Calu3 (cell line): ENCODE measurements at regions of chr9 and their contacts with region 1.

Region 1: DNA sequence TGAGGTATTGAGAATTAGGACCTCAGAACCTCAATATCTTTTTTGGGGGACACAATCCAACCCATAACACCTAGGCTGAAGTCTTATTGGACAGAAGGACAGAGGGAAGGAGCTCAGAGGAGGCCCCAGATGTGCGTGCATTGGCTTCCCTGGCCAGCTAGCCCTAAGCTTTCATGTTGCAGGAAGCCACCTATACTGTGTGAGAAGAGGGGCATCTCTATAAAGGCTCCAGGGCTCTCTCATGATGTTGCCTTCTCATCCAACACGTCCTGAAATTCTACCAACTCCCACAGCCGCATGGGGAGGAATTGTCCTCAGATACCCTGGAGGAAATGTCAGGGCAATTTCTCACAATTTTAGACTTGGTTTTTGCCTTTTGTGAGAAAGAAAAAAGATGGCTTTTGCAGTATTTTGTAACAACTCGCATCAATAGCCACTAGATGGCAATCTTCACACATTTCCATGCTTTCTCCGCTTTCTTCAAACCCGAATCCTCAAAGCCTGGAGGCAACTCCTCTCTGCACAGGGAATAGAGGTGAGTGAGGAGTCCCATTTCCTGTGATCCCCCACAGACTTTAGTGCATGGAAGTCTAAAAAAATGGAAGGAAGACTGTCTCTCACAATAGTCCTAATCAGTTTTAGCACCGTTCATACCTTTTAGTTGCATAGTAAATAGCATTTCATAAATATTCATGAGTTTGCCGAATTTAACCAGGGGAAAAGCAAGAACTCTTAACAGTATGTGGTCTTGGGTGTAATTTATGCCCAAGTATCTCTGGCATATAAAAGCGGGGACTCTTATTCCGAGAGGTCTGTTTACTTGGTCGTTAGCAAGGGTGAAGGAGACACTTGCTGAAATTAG is 7.4 kb upstream of the PPP3R2 start:
- DNase-seq: peak; percentile 10
- H3K4me3 Mint-ChIP-seq: no peak overlapping the region
- H3K27ac Mint-ChIP-seq: no peak overlapping the region
- H3K4me1 Mint-ChIP-seq: no peaks in the 10 kb centered on the region
- H3K27me3 Mint-ChIP-seq: peaks cover 20% of the 10 kb centered on the region
- CTCF ChIP-seq: peak; percentile 27

Region 2: DNA sequence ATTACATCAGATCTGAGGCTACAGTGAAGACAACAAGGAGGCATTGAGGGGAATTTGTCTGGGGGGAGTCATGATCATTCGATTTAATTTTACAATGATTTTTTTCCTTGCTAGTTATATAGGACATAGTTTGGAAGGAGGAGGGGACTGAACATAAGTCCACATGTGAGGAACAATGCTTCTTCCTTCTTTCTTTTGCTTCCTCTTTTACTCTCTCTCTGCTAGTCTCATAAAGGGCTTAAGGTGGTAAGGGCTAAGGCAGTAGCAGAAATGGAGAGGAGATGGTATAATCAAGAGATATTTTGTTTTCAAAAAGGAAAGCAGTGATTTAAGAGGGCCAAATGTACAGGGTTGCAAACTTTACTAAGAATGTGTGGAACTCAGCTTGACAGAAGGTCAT is 72.0 kb after region 1 on chr9:
- CTCF ChIA-PET with region 1: no interaction called
- intact Hi-C with region 1: no loop called
- DNase-seq: no peak
- H3K4me3 Mint-ChIP-seq: no peak overlapping the region
- H3K27ac Mint-ChIP-seq: peak overlapping the region; percentile 27
- H3K4me1 Mint-ChIP-seq: peaks cover 15% of the 10 kb centered on the region
- H3K27me3 Mint-ChIP-seq: no peaks in the 10 kb centered on the region
- CTCF ChIP-seq: no peak

Region 3: DNA sequence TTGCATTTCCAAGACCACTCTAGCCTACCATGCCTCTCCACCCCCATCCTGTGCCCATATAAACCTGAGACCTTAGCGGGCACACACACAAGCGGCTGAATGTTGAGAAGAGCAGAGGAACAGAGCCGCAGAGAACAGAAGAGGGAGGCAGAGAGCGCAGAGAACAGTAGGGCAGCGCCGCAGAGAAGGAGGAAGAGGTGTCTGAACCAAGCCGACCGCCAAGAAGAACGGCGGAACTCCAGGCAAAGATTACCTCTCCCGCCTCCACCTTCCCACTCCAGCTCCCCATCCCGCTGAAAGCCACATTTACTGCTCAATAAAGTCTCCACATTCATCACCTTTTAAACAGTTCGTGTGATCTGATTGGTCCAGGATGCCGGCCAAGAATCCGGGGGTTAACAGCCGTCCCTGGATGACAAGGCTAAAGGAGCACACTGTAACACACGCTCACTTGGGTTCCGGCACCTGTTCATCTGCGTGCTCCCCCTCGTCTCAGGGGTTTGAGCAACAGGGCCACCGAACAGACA is 103.1 kb after region 1 on chr9:
- CTCF ChIA-PET with region 1: no interaction called
- intact Hi-C with region 1: loop called (anchors 5 kb)
- DNase-seq: peak; percentile 43
- H3K4me3 Mint-ChIP-seq: peak overlapping the region; percentile 73
- H3K27ac Mint-ChIP-seq: peak overlapping the region; percentile 58
- H3K4me1 Mint-ChIP-seq: peaks cover 13% of the 10 kb centered on the region
- H3K27me3 Mint-ChIP-seq: no peaks in the 10 kb centered on the region
- CTCF ChIP-seq: no peak

Region 4: DNA sequence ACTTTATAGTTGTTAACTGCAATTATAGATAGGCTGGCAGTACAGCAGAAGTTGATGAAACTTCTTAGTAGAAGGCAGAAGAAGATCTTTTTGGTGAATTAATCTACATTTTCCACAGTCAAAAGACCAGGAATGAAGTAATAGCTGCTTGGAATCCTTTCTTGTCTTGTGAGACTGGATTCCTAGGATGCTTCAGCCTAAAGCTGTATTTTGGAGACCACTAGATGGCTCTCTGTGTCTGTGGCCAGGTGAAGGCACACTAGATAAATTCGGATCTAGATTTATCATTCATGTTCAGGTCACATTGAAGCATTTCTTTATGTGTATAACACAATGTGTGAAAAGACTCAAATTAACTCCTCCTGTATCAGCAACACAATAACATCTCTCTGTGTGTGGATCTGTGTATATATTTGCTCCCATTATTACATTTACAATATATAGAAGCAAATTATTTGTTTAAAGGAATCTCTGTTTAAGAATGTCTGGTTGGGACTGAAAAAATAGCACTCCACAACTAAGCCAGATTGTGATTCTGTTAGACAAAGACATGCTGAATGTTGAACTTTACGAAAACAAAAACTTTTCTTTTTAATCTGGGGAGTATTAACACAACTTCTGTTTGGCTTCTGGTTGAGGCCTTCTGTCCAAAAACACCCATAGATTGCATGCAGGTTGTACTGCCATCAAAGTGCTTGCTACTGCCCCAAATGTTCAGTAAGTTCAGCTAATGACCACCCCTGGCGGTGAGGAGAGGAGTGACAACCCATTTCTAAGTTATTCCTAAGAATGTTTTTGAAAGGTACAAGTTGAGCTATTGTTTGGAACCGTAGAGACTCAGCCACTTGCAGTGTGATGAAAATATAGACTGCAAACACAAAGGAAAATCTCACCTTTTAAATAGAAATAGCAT is 125.7 kb after region 1 on chr9:
- CTCF ChIA-PET with region 1: no interaction called
- intact Hi-C with region 1: loop called (anchors 1 kb)
- DNase-seq: peak; percentile 23
- H3K4me3 Mint-ChIP-seq: no peak overlapping the region
- H3K27ac Mint-ChIP-seq: no peak overlapping the region
- H3K4me1 Mint-ChIP-seq: no peaks in the 10 kb centered on the region
- H3K27me3 Mint-ChIP-seq: peaks cover 29% of the 10 kb centered on the region
- CTCF ChIP-seq: no peak

Region 5: DNA sequence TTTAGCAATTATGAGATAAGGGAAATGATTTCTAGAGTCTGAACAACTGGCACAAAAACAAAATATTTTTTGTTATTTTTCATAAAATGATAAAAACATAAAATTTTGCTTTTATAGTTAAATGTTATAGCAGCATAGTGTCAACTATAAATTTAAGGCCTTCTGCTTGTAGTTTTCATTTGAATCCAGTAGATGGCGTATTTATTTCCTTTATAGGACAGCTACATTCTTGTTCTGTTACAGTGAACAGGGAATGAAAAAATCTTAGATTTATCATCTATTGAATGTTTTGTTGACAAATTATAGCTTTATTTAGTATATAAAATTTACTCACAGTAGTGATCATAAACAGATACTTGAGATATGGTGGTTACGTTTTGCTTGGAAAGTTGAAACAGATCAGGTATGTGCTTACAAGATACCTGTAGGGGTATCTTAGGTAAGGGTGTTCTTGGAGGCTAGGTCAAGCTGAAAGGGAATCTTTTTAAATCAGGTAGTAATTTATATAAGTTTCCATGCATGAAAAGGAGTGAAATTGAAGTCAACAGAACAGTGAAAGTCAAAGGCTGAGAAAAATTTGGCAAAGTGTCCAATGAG is 375.6 kb after region 1 on chr9:
- CTCF ChIA-PET with region 1: no interaction called
- intact Hi-C with region 1: loop called (anchors 2 kb)
- DNase-seq: no peak
- H3K4me3 Mint-ChIP-seq: no peak overlapping the region
- H3K27ac Mint-ChIP-seq: no peak overlapping the region
- H3K4me1 Mint-ChIP-seq: no peaks in the 10 kb centered on the region
- H3K27me3 Mint-ChIP-seq: no peaks in the 10 kb centered on the region
- CTCF ChIP-seq: no peak